GM13976 (cell line): ENCODE measurements at regions of chr9 and their contacts with region 1.

Region 1: DNA sequence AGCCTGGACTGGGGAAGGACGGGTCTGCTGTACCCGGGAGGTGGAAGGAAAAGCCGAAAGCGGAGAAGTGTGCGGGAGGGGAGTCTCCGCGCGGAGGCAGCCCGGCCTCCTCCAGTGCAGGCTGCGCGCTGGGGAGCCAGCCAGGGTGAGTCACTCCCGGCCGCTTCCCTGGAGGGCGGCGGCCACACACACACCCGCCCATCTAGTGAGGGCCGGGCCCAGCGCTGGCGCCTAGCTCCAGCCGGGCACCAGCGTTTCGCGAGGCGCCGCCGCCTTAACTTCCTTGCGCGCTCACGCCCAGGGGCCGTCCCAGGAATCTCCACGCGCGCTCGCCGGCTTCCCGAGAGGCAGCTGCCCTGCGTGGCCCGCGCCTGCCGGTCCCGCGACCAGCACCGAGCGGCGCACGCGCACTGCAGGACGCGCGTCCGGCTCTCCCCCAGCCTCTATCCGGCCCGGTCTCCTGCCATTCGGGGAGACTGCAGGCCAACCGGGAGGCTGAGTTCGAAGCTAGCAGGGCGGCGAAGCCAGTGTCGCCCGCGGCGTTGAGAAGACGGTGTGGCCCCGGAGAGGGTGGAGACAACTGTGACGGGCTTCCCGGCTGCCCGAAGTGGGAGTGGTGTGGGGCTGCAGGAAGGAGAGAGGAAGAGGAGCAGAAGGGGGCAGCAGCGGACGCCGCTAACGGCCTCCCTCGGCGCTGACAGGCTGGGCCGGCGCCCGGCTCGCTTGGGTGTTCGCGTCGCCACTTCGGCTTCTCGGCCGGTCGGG is at the start of gene JAK2:
- DNase-seq: peak; percentile 82
- CTCF ChIP-seq: peak; percentile 57

Region 2: DNA sequence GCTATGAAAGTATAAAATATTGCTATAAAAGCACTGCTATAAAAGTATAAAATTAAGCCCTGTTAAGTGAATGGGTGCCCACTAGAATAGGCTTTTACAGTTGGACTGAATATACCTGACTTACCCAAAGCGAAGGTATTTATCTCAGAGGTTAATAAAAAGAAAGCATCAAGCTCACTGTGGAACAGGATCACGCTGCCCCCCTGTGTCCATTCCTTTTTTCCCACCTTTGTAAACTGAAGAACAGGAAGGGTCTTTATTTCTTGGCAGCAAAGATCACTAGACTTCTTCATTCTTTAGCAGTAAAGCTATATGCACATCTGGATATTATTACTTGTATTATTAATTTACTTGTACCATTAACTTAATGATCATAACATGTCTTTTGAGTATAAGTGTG is 344.8 kb before region 1 on chr9:
- in situ Hi-C with region 1: no loop called
- DNase-seq: peak; percentile 32
- CTCF ChIP-seq: peak; percentile 23

Region 3: GRCh38 chr9:4762108-4762885 is 222.5 kb before region 1 on chr9:
- in situ Hi-C with region 1: loop called (anchors 10 kb)
- DNase-seq: peak; percentile 63
- CTCF ChIP-seq: peak; percentile 85

Region 4: GRCh38 chr9:5442400-5443011 is 457.7 kb after region 1 on chr9:
- in situ Hi-C with region 1: loop called (anchors 10 kb)
- DNase-seq: no peak
- CTCF ChIP-seq: peak; percentile 50